ENCODE measurements at regions of chr4 and their contacts with region 1.

Region 1: DNA sequence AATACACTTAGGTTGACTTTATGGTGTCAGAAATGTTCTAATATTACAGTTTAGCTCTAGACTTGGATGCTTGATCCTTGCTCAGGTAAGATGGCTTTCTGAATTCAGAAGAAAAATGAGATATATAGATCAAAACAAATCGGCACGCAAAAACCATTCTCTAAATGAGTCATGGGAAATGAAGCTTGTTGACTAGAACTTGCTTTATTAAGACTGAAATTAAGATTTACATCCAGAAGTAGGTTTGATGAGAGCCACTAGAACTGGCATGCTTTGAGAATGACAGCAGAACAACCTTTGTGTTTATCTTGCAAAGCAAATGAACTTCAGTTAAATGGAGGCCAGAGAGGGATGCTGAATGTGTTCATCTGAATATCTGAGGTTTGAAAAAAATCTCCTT is 304.9 kb upstream of the KLF3 start:
- DNase-seq: no peak
- H3K4me3 Mint-ChIP-seq: no peak overlapping the region
- H3K27ac Mint-ChIP-seq: peak overlapping the region; percentile 15
- H3K4me1 Mint-ChIP-seq: peaks cover 12% of the 10 kb centered on the region
- H3K27me3 Mint-ChIP-seq: no peaks in the 10 kb centered on the region

Region 2: GRCh38 chr4:38334810-38335537 is 24.1 kb before region 1 on chr4:
- CTCF ChIA-PET with region 1: no interaction called
- POLR2A ChIA-PET with region 1: no interaction called
- intact Hi-C with region 1: loop called (anchors 2 kb)
- DNase-seq: no peak
- H3K4me3 Mint-ChIP-seq: no peak overlapping the region
- H3K27ac Mint-ChIP-seq: no peak overlapping the region
- H3K4me1 Mint-ChIP-seq: peaks cover 32% of the 10 kb centered on the region
- H3K27me3 Mint-ChIP-seq: peaks cover 30% of the 10 kb centered on the region

Region 3: GRCh38 chr4:38347251-38347650 is 11.9 kb before region 1 on chr4:
- CTCF ChIA-PET with region 1: no interaction called
- POLR2A ChIA-PET with region 1: no interaction called
- intact Hi-C with region 1: no loop called
- DNase-seq: no peak
- H3K4me3 Mint-ChIP-seq: no peak overlapping the region
- H3K27ac Mint-ChIP-seq: no peak overlapping the region
- H3K4me1 Mint-ChIP-seq: no peaks in the 10 kb centered on the region
- H3K27me3 Mint-ChIP-seq: peaks cover 5% of the 10 kb centered on the region